ENCODE measurements at regions of chr7 and their contacts with region 1.

Region 1: GRCh38 chr7:55255496-55256435 is 109.4 kb upstream of the LANCL2 start:
- DNase-seq: peak; percentile 71 to 85
- ATAC-seq: peak; percentile 89 to 91
- H3K4me3 ChIP-seq: peak overlapping the region; percentile 69
- H3K27ac ChIP-seq: peak overlapping the region; percentile 91 to 95
- H3K4me1 ChIP-seq: peaks cover 4% of the 10 kb centered on the region; the same call in 1 of the 3 replicates
- CTCF ChIP-seq: peak; percentile 82
- EP300 ChIP-seq: no peak
- POLR2A ChIP-seq: no peak
- RAD21 ChIP-seq: peak; percentile 91 to 94

Region 2: DNA sequence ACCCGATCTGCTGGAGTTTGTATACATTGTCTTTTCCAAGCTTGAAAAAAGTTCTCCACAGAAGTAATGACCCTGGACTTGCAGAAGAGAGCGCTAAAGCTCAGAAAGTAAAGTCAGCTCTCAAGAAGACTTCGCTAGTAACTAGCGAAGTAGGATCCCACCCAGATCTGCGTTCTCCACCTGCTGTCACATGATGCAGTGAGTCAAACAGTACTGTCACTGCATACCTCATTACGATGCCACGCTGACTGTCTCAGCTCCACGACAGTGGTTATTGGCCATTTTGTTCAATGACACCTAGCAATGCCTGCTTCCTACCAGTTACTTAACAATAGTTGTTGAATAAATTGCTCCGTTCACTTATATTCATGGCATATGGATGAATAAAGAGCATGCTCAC is 467.1 kb before region 1 on chr7:
- CTCF ChIA-PET with region 1: interaction called, 742 read pairs
- POLR2A ChIA-PET with region 1: interaction called, 12 read pairs
- DNase-seq: peak; percentile 94 to 96
- ATAC-seq: peak; percentile 97 to 100
- H3K4me3 ChIP-seq: no peak overlapping the region
- H3K27ac ChIP-seq: peak overlapping the region; percentile 68 to 82
- H3K4me1 ChIP-seq: peaks cover 29% of the 10 kb centered on the region
- CTCF ChIP-seq: peak; percentile 89
- EP300 ChIP-seq: no peak
- POLR2A ChIP-seq: no peak
- RAD21 ChIP-seq: peak; percentile 96 to 97

Region 3: GRCh38 chr7:54877683-54878082 is 378.1 kb before region 1 on chr7:
- CTCF ChIA-PET with region 1: interaction called, 16 read pairs
- POLR2A ChIA-PET with region 1: no interaction called
- DNase-seq: peak in 1 of 2 experiments; percentile 55
- ATAC-seq: peak in 1 of 2 experiments; percentile 36; a peak in 1 of 6 replicates
- H3K4me3 ChIP-seq: no peak overlapping the region
- H3K27ac ChIP-seq: peak overlapping the region; percentile 94 to 99
- H3K4me1 ChIP-seq: peaks cover 69% of the 10 kb centered on the region
- CTCF ChIP-seq: peak; percentile 34; the same call in 2 of the 3 replicates
- EP300 ChIP-seq: no peak
- POLR2A ChIP-seq: no peak
- RAD21 ChIP-seq: peak; percentile 53 to 57

Region 4: DNA sequence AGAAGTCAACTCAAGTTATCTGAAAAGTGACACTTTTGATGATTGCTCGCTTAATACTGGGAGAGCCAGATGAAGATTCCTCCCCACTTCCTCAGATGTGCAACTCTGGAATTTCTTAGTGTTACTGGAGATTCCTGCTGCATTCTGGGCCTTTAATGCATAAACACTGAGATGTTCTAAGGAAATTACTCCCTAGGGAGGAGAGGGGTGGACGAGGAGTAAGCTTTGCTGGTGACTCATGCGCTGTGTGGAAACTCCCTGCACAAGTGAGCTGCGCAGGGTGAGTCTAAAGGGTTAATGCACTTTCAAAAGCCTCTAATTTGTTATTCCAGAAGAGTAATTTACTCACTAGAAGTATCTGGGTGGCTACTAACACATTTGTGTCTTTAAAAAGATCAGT is 190.7 kb before region 1 on chr7:
- CTCF ChIA-PET with region 1: interaction called, 38 read pairs
- POLR2A ChIA-PET with region 1: no interaction called
- DNase-seq: peak; percentile 84 to 93
- ATAC-seq: peak; percentile 88 to 89
- H3K4me3 ChIP-seq: no peak overlapping the region
- H3K27ac ChIP-seq: peak overlapping the region; percentile 84 to 92
- H3K4me1 ChIP-seq: peaks cover 98% of the 10 kb centered on the region
- CTCF ChIP-seq: no peak
- EP300 ChIP-seq: peak in 1 of 2 experiments; percentile 72; a peak in 1 of 5 replicates
- POLR2A ChIP-seq: no peak
- RAD21 ChIP-seq: no peak; a peak in 1 of 5 replicates

Region 5: GRCh38 chr7:55100544-55101301 is 155.0 kb before region 1 on chr7:
- CTCF ChIA-PET with region 1: no interaction called
- POLR2A ChIA-PET with region 1: no interaction called
- DNase-seq: no peak
- ATAC-seq: no peak; a peak in 3 of 6 replicates
- H3K4me3 ChIP-seq: no peak overlapping the region
- H3K27ac ChIP-seq: no peak overlapping the region; a peak in 1 of 6 replicates
- H3K4me1 ChIP-seq: peaks cover 42% of the 10 kb centered on the region; the same call in 2 of the 3 replicates
- CTCF ChIP-seq: no peak
- EP300 ChIP-seq: no peak
- POLR2A ChIP-seq: no peak
- RAD21 ChIP-seq: no peak

Region 6: GRCh38 chr7:55177589-55178261 is 78.0 kb before region 1 on chr7:
- CTCF ChIA-PET with region 1: interaction called, 14 read pairs
- POLR2A ChIA-PET with region 1: no interaction called
- DNase-seq: no peak
- ATAC-seq: no peak
- H3K4me3 ChIP-seq: no peak overlapping the region
- H3K27ac ChIP-seq: no peak overlapping the region
- H3K4me1 ChIP-seq: peaks cover 13% of the 10 kb centered on the region
- CTCF ChIP-seq: no peak
- EP300 ChIP-seq: no peak
- POLR2A ChIP-seq: no peak
- RAD21 ChIP-seq: no peak

Region 7: GRCh38 chr7:55237156-55237893 is 18.4 kb before region 1 on chr7:
- CTCF ChIA-PET with region 1: interaction called, 56 read pairs
- POLR2A ChIA-PET with region 1: no interaction called
- DNase-seq: no peak
- ATAC-seq: no peak
- H3K4me3 ChIP-seq: no peak overlapping the region
- H3K27ac ChIP-seq: no peak overlapping the region
- H3K4me1 ChIP-seq: no peaks in the 10 kb centered on the region
- CTCF ChIP-seq: no peak
- EP300 ChIP-seq: no peak
- POLR2A ChIP-seq: no peak
- RAD21 ChIP-seq: no peak

Region 8: GRCh38 chr7:55309040-55309991 is 53.5 kb after region 1 on chr7:
- CTCF ChIA-PET with region 1: no interaction called
- POLR2A ChIA-PET with region 1: no interaction called
- DNase-seq: no peak
- ATAC-seq: no peak
- H3K4me3 ChIP-seq: no peak overlapping the region
- H3K27ac ChIP-seq: no peak overlapping the region
- H3K4me1 ChIP-seq: no peaks in the 10 kb centered on the region
- CTCF ChIP-seq: no peak
- EP300 ChIP-seq: no peak
- POLR2A ChIP-seq: no peak
- RAD21 ChIP-seq: no peak

Region 9: DNA sequence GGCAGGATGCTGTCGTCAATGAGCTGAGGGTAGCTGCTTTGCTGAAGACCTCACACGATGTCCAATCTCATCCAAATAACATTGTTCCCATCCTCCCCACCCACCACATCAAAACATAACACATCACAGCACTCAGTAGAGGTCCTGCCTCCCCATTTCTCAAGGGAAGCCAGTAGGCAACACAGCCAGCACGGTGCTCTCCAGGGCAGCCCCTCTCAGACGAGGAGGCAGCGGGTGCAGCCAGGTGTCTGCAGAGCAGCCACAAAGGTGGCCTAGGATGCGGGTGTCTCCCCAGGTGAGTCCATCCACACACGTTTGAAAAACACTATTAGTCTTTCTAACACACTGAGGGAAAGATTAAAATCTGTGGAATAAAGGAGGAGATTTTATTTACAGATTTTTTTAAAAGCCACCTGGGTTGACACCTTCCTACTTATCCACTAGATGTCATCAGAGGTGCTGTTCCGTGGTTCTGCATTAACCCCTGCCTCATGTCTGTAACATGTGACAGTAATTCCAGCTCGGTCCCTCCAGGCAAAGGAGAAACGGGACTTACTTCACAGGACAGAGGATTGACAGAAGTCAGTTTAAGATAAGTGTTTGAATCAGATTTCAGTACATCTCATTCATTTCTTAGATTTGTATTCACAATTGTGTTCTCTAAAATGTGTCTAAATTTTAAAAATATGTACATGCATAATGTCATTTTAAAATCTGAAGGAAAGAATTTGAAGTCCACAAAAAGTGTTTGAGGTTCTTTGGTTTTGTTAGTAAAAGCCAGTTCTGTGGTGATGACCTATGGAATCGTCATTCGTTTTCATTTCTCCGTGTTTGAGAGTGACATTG is 177.4 kb after region 1 on chr7:
- CTCF ChIA-PET with region 1: no interaction called
- POLR2A ChIA-PET with region 1: no interaction called
- DNase-seq: peak; percentile 53 to 62
- ATAC-seq: peak; percentile 60 to 86; a peak in 4 of 6 replicates
- H3K4me3 ChIP-seq: no peak overlapping the region
- H3K27ac ChIP-seq: no peak overlapping the region
- H3K4me1 ChIP-seq: no peaks in the 10 kb centered on the region
- CTCF ChIP-seq: peak; percentile 57
- EP300 ChIP-seq: no peak
- POLR2A ChIP-seq: no peak
- RAD21 ChIP-seq: peak; percentile 68 to 69